Calu3 (cell line): ENCODE measurements at regions of chr14 and their contacts with region 1.

Region 1: DNA sequence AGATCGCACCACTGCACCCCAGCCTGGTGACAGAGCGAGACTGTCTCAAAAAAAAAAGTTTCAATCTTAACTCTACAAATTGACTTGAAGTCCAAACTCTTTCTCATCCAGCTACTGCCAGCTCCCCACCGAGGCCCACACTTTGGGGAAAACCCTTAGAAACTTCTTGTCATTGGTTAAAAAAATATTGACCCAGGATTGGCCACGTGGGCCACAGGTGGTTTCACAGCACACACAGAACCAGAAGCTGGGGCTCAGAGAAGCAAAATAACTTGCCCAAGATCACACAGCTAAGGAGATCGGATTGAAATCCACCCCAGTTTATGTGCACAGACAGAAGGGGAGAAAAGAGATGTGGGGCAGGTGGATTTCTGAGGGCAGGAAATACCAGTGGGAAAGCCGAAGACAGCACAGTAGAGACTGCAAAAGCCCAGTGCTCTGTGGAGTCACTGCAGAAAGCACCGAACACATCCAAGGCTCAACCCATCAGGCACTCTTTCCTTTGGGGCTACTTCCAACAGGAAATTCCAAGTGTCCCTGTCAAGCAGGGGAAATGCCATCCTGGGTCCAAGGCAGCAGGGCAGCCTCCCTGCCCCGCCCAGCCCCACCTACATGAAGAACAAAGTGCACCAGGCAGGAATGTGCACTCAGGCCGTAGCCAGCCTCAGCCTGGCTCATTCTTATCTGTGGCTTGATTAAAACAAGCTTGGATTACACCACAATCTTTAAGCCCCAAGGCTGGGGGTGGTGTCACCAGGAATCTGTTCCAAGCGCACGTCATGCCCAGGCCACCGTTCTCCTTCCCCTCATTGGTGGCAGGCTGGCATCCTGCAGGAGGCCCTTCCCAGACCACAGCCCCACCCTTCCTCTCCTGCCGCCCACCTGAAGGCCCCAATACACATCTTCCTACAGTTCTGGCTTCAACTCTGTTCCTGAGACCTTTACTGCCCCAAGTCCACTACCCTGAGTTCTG is 72.5 kb downstream of the ITPK1 start:
- DNase-seq: peak; percentile 96
- H3K4me3 Mint-ChIP-seq: peak overlapping the region; percentile 50
- H3K27ac Mint-ChIP-seq: peak overlapping the region; percentile 88
- H3K4me1 Mint-ChIP-seq: peaks cover 87% of the 10 kb centered on the region
- H3K27me3 Mint-ChIP-seq: no peaks in the 10 kb centered on the region
- CTCF ChIP-seq: no peak

Region 2: GRCh38 chr14:92945959-92946846 is 97.1 kb before region 1 on chr14:
- CTCF ChIA-PET with region 1: no interaction called
- intact Hi-C with region 1: loop called (anchors 5 kb)
- DNase-seq: peak; percentile 92
- H3K4me3 Mint-ChIP-seq: peak overlapping the region; percentile 2
- H3K27ac Mint-ChIP-seq: peak overlapping the region; percentile 86
- H3K4me1 Mint-ChIP-seq: peaks cover 16% of the 10 kb centered on the region
- H3K27me3 Mint-ChIP-seq: no peaks in the 10 kb centered on the region
- CTCF ChIP-seq: no peak

Region 3: DNA sequence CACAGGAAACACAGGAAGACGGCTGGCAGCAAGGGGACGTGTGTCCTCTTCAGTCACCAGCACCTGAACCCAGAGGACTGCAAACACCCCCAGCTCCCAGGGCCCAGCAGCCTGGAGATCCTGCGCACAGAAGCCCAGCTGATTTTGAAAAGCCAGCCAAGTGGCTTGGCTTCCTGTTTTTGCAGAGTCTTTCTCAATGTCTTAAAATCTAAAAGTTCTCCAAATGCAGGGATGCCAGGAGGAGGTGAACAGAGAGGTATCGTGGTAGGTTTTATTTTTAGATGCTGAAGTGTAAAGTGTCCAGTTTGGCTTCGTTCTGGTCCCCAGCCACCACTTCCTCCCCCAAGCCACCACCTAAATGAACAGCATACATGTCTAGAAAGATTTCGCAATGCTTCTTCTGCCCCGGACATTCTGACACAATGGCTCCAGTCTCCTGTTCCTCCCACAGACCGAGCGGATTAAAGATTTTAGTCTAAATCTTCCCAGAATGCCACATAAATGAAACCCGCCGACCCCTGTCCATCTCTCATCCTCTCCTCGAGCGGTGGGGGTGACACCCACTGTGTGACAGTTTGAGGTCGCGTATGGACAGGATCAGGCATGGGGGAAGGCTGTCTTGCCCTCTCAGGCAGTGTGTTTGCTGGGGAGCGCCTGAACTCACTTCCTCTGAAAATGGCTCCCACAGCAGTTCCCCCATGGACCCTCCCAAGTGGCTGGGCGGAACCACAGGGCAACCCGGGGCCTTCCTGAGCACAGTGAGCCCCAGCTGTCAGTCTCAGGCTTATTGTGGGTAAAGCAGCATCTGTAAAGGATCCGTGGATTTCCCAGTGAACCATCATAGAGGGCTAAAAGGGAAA is 30.9 kb after region 1 on chr14:
- CTCF ChIA-PET with region 1: no interaction called
- intact Hi-C with region 1: loop called (anchors 2 kb)
- DNase-seq: peak; percentile 21
- H3K4me3 Mint-ChIP-seq: no peak overlapping the region
- H3K27ac Mint-ChIP-seq: no peak overlapping the region
- H3K4me1 Mint-ChIP-seq: peaks cover 36% of the 10 kb centered on the region
- H3K27me3 Mint-ChIP-seq: no peaks in the 10 kb centered on the region
- CTCF ChIP-seq: no peak

Region 4: GRCh38 chr14:93106541-93107156 is 63.4 kb after region 1 on chr14:
- CTCF ChIA-PET with region 1: no interaction called
- intact Hi-C with region 1: no loop called
- DNase-seq: no peak
- H3K4me3 Mint-ChIP-seq: no peak overlapping the region
- H3K27ac Mint-ChIP-seq: no peak overlapping the region
- H3K4me1 Mint-ChIP-seq: peaks cover 15% of the 10 kb centered on the region
- H3K27me3 Mint-ChIP-seq: no peaks in the 10 kb centered on the region
- CTCF ChIP-seq: no peak